ENCODE measurements at regions of chr10 and their contacts with region 1.

Region 1: DNA sequence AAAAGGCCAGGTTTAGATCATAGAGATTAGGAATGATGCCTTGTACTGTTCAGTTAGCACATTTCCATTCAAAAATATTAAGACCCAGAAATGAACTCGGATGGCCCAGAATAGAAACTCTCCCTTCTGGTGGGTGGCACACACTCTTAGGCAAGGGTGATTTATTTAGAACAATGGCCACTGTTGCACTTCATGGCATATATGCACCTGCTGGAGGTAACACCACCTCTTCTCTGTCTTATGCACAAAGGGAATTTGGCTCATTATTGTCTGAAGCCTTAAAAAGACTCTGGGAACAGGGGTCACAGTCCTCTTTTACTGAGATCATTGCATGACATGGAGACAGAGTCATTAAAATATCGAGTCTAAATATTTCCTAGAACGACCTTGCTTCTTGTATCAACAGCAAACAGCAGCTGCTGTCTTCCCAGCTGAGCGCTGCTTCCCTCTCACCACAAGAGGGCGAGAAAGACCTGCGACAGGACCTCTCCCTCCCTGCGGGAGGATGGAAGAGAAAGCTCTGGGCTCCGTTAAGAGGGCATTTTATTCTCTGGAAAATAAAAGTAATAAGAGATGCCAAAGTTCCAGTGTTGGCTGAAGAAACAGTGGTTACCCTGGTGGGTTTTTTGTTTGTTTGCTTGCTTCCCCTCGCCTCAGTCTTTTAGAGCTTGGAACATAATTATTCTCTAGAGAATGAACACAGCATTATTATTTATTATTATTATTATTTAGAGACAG is 13.6 kb upstream of the BAMBI start:
- DNase-seq: peak; percentile 73
- CTCF ChIP-seq: peak; percentile 98

Region 2: DNA sequence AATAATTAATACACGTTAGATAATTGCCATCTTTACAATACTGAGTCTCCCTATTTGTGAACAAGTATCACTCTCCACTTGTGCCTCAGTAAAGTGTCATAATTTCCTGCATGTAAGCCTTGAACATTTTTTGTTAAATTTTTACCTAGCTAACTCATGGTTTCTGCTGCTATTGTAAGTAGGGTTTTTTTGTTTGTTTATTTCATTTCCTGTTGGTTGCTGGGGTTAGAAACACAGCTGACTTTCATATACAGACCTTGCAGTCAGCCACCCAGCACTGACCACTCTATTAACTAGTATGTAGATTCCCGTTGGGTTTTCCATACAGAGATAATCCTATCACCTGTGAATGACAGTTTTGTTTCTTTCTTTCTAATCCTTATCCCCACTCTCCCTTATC is 494.2 kb before region 1 on chr10:
- in situ Hi-C with region 1: no loop called
- DNase-seq: no peak
- CTCF ChIP-seq: no peak

Region 3: GRCh38 chr10:28991326-28992270 is 327.9 kb after region 1 on chr10:
- in situ Hi-C with region 1: loop called (anchors 10 kb)
- DNase-seq: peak; percentile 26
- CTCF ChIP-seq: peak; percentile 70

Region 4: GRCh38 chr10:29304264-29305030 is 640.7 kb after region 1 on chr10:
- in situ Hi-C with region 1: loop called (anchors 25 kb)
- DNase-seq: peak; percentile 62
- CTCF ChIP-seq: peak; percentile 85

Measured in GM13977 (cell line).